Prostate gland (tissue), 2 donors: ENCODE measurements at regions of chr6 and their contacts with region 1.

Region 1: DNA sequence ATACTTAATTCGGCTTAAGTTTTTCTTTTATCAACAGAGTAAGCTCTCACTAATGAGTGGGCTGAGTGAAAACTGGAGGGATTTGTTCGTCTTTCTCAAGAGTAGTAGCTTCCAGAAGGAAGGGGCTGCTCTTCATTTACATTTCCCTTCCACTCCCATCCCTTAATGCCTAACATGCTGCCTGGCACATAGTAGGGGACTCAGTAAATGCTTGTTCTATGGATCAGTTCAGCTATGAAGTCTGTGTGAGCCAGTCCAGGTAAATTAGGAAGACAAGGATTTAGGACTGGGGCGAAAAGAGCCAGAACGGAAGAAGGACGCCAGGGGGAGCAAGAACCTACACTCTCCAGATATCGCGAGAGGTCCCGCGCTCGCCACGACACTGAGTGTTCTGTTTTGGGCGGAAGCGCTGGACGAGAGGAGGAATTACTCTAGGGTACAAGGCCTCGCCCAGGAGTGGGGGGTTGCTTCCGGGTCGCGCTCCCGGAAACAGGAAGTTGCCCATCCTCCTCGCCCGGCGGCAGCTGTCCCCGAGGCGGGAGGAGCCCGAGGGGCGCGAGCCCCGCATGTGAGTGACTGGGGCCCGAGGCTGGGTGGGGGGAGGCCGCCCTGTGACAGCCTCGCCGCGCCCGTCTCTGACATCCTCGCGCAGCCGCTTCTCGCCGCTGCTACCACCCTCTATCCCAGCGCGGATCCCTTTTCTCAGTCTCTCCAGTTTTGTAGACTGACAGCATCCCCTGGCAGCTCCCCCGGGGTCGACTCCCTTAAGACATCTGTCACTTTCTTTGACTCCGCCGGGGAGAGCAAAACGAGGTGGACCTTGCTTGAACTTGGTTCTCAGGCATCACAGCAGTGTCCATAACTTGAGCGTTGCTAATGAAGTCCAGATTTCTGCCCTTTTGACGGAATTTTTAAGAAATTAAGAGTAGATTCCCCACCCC is at the start of gene C6orf89:
- DNase-seq: peak; percentile 97
- H3K4me3 ChIP-seq: peak within 1 kb of the TSS; percentile 64 to 69
- H3K27ac ChIP-seq: peak within 1 kb of the TSS; percentile 72 to 76
- H3K4me1 ChIP-seq: peaks cover 5% of the 10 kb centered on the region
- H3K27me3 ChIP-seq: no peaks in the 10 kb centered on the region
- CTCF ChIP-seq: peak; percentile 84 to 98 (median 96)
- POLR2A ChIP-seq: peak; percentile 53
- total RNA-seq, gene C6orf89: 54.9 to 96.9 TPM

Region 2: GRCh38 chr6:36979347-36979742 is 93.6 kb after region 1 on chr6:
- intact Hi-C with region 1: loop called (anchors 2 kb)
- DNase-seq: no peak
- H3K4me3 ChIP-seq: no peak overlapping the region
- H3K27ac ChIP-seq: peak overlapping the region; percentile 35 to 60
- H3K4me1 ChIP-seq: peaks cover 7% of the 10 kb centered on the region
- H3K27me3 ChIP-seq: no peaks in the 10 kb centered on the region
- CTCF ChIP-seq: peak; percentile 23 to 70 (median 52)
- POLR2A ChIP-seq: no peak